AG04450 (cell line): ENCODE measurements at regions of chr2 and their contacts with region 1.

Region 1: DNA sequence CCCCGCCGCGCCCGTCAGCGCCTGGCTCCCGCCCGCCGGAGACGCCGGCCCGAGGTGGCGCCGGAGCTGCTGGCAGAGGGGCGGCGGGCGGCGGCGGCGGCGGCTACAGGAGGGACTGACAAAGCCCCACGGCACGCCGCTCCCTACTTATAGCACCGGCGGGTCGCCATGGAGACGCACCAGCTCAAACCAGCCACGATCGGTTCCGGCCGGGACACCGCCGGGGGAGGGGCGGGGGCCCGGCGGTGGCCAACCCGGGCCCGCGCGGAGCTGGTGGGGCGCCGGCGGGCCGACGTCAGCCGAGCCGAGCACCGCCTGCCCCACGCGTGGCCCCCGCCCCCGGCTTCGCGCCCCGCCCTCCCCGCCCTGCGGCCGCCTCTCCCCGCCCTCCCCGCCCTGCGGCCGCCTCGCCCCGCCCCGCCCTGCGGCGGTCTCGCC is at the start of gene ODC1:
- DNase-seq: peak; percentile 75
- H3K4me3 ChIP-seq: peak within 1 kb of the TSS; percentile 72
- H3K27ac ChIP-seq: peak within 1 kb of the TSS; percentile 83
- H3K27me3 ChIP-seq: no peaks in the 10 kb centered on the region
- CTCF ChIP-seq: no peak
- polyA plus RNA-seq, gene ODC1: 143 and 168 TPM in 2 replicates

Region 2: GRCh38 chr2:10135296-10136089 is 312.7 kb before region 1 on chr2:
- CTCF ChIA-PET with region 1: no interaction called
- POLR2A ChIA-PET with region 1: no interaction called
- DNase-seq: no peak
- H3K4me3 ChIP-seq: no peak overlapping the region
- H3K27ac ChIP-seq: no peak overlapping the region
- H3K27me3 ChIP-seq: no peaks in the 10 kb centered on the region
- CTCF ChIP-seq: no peak

Region 3: DNA sequence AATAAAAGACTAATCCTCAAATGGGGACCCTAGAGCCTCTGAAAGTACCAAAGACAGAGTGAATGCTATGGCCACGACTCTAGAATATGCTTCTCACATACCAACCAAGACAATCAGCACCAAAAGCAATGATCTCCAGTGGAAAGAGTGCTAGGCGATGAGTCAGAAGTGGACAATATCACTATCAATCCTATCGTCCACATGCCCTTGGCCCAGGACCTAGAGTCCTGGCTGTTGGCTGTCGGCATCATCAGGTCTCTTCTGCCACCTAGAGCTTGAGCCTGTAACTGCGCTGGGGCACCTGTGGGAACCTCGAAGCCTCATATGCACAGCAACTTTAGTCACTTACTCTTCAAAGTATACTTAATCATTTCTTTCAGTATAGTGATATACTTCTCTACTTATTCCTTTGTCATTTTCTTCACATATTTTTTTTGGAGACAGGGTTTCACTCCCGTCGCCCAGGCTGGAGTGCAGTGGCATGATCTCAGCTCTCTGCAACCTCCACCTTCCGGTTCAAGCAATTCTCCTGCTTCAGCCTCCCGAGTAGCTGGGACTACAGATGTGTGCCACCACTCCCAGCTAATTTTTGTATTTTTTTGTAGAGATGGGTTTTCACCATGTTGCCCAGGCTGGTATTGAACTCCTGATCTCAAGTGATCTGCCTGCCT is 211.8 kb after region 1 on chr2:
- CTCF ChIA-PET with region 1: interaction called, 25 read pairs
- POLR2A ChIA-PET with region 1: interaction called, 4 read pairs
- DNase-seq: peak; percentile 63
- H3K4me3 ChIP-seq: no peak overlapping the region
- H3K27ac ChIP-seq: no peak overlapping the region
- H3K27me3 ChIP-seq: no peaks in the 10 kb centered on the region
- CTCF ChIP-seq: peak; percentile 85

Region 4: DNA sequence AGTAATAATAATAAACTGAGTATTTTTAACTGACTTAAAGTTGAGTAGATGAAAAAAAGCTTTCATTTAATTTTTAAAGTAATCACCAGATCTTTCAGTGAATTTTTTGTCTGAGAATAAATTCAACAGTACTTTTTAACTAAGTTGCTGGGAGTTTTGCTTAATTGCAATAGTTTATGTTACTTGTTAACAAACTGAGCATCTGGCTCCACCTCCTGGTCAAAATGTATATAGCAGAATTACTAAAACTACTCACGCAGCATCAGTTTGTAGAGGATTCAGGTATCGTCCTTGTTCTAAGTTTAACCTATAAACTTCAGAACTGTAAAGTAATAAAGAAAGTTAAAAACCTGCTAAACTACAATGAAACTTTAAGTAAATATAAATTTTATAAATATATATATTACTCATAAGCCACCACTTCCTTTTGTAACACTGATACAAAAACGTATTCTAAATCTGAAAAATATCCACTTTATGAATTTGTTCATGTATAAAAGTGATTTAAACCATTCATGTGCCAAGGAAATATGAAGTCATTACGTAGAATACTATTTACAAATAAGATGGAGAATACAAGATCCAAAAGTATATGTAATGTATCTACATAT is 220.3 kb after region 1 on chr2:
- CTCF ChIA-PET with region 1: interaction called, 12 read pairs
- POLR2A ChIA-PET with region 1: interaction called, 3 read pairs
- DNase-seq: peak; percentile 23
- H3K4me3 ChIP-seq: no peak overlapping the region
- H3K27ac ChIP-seq: no peak overlapping the region
- H3K27me3 ChIP-seq: no peaks in the 10 kb centered on the region
- CTCF ChIP-seq: peak; percentile 66